ENCODE measurements at regions of chr5 and their contacts with region 1.

Region 1: DNA sequence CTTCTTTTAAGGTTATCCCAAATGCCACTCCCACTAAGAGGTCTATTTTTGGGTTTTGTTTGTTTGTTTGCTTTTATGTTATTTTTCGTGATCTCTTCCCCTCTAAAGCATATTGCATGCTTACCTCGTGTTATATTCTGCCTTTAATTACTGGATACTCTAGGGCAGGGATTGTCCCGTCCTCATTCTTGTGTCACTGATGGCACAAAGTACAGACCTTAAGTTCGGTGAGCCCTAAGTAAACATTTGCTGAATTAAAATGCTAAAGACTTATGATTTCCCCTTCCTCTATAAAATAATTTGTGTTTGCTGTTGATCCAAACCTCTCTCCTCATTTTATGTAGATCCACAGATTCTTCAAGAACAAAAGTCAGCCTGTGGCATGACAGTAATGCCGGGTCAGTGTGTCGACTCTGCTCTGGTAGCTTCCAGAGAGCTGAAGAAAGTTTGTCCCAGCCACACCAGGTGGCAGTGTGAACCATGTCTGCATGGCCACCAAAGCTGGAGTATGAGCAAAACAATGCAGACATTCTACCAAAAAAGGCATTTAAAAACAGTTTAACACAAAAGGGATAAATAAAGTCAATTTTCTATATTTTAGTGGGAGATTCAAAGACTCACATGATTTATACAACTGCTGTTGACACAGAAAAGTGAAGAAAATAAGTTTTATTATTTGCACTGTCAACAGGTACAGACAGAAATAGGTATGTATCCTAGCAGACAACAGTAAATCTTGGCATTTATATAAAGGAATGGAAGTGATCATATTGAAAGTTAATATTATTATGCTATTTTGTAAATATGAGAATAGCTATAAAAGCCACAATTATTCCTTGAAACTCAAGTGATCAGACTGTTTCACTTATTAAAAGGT is 17.9 kb upstream of the POC5 start:
- DNase-seq: no peak

Region 2: GRCh38 chr5:75306746-75307145 is 428.4 kb before region 1 on chr5:
- intact Hi-C with region 1: no loop called
- DNase-seq: no peak

Region 3: GRCh38 chr5:75460532-75460931 is 274.6 kb before region 1 on chr5:
- intact Hi-C with region 1: no loop called
- DNase-seq: no peak

Region 4: DNA sequence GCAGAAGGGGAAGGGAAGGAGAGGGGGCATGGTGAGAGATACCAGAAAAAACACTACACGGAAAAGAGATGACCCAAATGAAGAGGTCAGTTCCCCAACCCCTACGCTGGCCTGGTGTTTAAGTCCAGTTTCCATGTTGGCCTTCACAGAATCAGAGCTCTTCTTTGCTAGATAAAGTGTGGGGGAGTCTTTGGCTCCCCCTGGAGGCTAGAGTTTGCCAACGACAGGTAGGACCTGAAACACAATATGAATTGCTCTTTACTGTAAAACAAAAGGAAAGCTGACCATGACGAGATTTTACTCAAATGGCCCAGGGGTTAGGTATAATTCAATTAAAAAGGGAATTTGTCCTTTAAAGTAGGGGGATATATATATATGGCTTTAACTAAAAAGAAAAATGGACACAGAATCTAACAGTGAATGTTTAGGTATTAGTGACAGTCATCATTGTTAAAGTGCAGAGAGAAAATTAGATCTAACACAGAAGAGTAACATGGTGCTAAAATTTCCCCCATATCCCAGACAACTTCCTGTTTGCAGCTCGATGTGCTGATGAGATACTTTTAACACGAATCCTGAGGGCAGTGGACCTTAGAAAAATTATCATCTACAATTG is 440.0 kb after region 1 on chr5:
- intact Hi-C with region 1: loop called (anchors 5 kb)
- DNase-seq: no peak

Region 5: DNA sequence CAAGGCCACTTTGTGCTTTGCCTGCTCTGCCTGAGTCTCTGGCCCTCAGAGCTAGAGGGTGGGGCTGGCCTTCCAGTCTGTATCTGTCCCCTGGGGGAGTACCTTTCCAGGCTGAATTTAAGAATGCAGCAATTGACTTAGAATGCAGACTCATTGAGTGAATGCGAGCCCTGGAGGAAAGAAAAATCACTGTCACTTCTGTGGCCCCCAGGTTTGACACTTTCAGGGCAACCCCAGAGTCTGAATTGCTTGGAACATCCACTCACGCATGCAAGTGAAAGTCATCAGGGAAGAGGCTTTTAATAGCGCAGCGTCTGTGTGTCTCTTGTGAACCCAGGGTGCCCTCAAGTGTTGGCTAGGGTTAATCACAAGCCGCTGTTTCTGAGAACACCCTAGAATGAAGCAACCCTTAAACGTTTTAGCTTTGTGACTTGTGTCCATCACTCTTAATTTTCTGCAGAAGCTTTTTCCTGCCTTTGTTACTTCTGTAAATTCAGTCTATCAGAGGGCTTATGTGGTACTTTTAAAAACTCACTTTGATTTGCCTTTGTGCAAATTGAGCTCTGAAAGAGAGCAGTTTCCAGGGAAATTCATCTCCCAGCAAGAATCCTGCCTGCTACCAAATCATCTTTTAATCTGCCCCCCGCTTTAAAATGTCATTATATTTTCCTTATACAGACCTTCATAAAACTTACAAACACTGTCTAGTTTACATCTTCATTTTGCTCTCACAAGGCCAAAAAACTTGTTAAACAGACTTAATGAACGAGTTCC is 521.2 kb after region 1 on chr5:
- intact Hi-C with region 1: loop called (anchors 5 kb)
- DNase-seq: no peak